ENCODE measurements at regions of chr1 and their contacts with region 1.

Region 1: GRCh38 chr1:145885738-145886287 is at the start of gene ANKRD35:
- DNase-seq: peak; percentile 74 to 92 (median 88)
- ATAC-seq: peak; percentile 98
- H3K4me3 ChIP-seq: peak within 1 kb of the TSS; percentile 68 to 84
- H3K4me3 Mint-ChIP-seq: peak within 1 kb of the TSS; percentile 81
- H3K27ac ChIP-seq: no peak within 1 kb of the TSS
- H3K27ac Mint-ChIP-seq: no peak within 1 kb of the TSS
- H3K4me1 ChIP-seq: peaks cover 8% of the 10 kb centered on the region
- H3K4me1 Mint-ChIP-seq: peaks cover 17% of the 10 kb centered on the region
- H3K27me3 ChIP-seq: peaks cover 0 to 8% of the 10 kb centered on the region in 2 experiments
- H3K27me3 Mint-ChIP-seq: peaks cover 17% of the 10 kb centered on the region
- CTCF ChIP-seq: no peak
- total RNA-seq, gene ANKRD35: not detected

Region 2: DNA sequence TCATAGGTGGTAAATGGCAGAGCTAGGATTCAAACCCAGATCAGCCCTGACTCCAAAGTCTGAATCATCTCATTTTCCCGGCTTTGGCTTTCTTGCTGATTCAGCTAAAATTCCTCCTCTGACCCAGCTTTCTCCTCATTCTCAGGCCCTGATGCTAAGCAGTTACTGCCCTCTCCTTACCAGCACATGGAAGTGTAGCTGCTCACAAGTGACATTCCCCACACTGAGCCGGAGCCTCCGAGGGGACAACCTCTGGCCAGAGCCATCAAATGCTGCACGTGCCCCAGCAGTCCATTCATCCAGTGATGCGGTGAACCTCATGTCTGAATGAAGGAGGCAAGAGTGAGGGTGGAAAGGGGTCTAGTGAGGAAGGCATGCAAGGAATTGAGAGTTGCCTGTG is 12.9 kb after region 1 on chr1:
- CTCF ChIA-PET with region 1: no interaction called
- POLR2A ChIA-PET with region 1: no interaction called
- intact Hi-C with region 1: no loop called
- DNase-seq: no peak
- ATAC-seq: no peak
- H3K4me3 ChIP-seq: no peak overlapping the region
- H3K4me3 Mint-ChIP-seq: no peak overlapping the region
- H3K27ac ChIP-seq: no peak overlapping the region
- H3K27ac Mint-ChIP-seq: no peak overlapping the region
- H3K4me1 ChIP-seq: no peaks in the 10 kb centered on the region
- H3K4me1 Mint-ChIP-seq: no peaks in the 10 kb centered on the region
- H3K27me3 ChIP-seq: no peaks in the 10 kb centered on the region
- H3K27me3 Mint-ChIP-seq: no peaks in the 10 kb centered on the region
- CTCF ChIP-seq: no peak

Region 3: DNA sequence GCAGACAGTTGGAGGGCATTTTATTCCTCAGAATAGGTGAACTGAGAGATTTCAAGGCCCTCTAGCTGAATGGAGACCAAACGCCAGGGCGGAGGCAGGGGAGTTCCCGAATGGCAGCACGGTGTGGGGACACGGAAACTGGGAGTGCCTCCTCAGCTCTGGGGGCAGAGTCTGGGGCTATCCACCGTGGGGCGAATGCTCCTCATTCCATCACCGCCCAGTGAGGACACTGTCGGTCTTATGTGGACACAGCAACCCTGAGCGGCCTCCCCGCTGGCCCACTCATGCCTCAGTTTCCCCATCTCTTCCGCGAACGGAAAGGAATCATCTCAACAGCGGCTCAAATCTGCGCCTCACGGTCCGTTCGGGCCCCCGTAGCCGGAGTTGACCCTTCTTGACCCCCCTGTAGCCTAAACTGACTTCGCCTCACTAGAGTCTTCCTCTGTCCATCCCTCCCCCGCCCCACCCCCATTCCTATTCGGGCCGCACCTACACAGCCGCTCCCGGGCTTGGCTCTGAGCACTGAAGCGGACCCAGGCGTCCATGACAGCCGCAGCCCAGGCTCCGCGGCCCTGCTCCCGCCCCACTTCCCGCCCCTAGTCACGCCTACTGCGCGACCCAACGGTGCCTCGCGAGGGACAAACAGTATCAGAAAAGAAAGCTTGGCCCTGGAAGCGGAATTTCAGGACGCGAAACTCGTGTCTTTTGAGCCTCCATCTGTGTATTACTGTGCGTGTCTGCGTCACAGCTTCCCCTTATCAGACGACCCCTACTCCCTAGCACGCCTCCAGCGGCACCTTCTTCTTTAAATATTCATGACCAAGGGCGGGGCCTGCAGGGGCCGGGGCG is 32.6 kb after region 1 on chr1 and contains the start of gene PEX11B:
- CTCF ChIA-PET with region 1: interaction called, 7 read pairs
- POLR2A ChIA-PET with region 1: no interaction called
- intact Hi-C with region 1: loop called (anchors 1 to 2 kb)
- DNase-seq: peak; percentile 87 to 96 (median 93)
- ATAC-seq: peak; percentile 91
- H3K4me3 ChIP-seq: peak within 1 kb of the TSS; percentile 88 to 96
- H3K4me3 Mint-ChIP-seq: peak within 1 kb of the TSS; percentile 90
- H3K27ac ChIP-seq: peak within 1 kb of the TSS; percentile 74 to 86
- H3K27ac Mint-ChIP-seq: peak within 1 kb of the TSS; percentile 96
- H3K4me1 ChIP-seq: peaks cover 24% of the 10 kb centered on the region
- H3K4me1 Mint-ChIP-seq: peaks cover 43% of the 10 kb centered on the region
- H3K27me3 ChIP-seq: no peaks in the 10 kb centered on the region
- H3K27me3 Mint-ChIP-seq: no peaks in the 10 kb centered on the region
- CTCF ChIP-seq: no peak
- total RNA-seq, gene PEX11B: 11.8 TPM

Region 4: GRCh38 chr1:145949219-145949618 is 63.4 kb after region 1 on chr1:
- CTCF ChIA-PET with region 1: no interaction called
- POLR2A ChIA-PET with region 1: no interaction called
- intact Hi-C with region 1: no loop called
- DNase-seq: no peak
- ATAC-seq: no peak
- H3K4me3 ChIP-seq: no peak overlapping the region
- H3K4me3 Mint-ChIP-seq: no peak overlapping the region
- H3K27ac ChIP-seq: no peak overlapping the region
- H3K27ac Mint-ChIP-seq: peak overlapping the region; percentile 33
- H3K4me1 ChIP-seq: peaks cover 16% of the 10 kb centered on the region
- H3K4me1 Mint-ChIP-seq: peaks cover 53% of the 10 kb centered on the region
- H3K27me3 ChIP-seq: no peaks in the 10 kb centered on the region
- H3K27me3 Mint-ChIP-seq: no peaks in the 10 kb centered on the region
- CTCF ChIP-seq: no peak